HEK293 (cell line): ENCODE measurements at regions of chr11 and their contacts with region 1.

Region 1: GRCh38 chr11:73818846-73819245 is 31.2 kb downstream of the MRPL48 start:
- H3K4me3 ChIP-seq: no peak overlapping the region
- H3K27ac ChIP-seq: no peak overlapping the region
- H3K4me1 ChIP-seq: no peaks in the 10 kb centered on the region
- CTCF ChIP-seq: no peak

Region 2: DNA sequence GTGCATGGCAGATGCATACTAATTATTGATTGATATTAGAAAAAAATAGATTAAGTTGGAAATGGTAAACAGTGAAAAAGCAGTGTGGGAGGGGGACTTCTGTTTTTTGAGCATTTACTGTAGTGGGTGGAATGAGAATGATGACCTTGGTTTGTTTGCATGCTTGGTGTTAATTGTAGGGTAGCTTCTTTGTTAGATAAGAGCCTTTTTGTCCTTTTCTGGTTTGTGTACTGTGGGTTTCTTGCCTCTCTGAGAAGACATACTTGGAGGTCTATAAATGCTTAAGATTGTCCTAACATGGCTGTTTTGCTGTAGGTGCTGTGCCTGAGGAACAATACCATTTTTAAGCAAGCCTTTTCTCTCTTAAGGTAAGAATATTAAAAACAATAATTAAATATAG is 14.1 kb before region 1 on chr11:
- CTCF ChIA-PET with region 1: no interaction called
- POLR2A ChIA-PET with region 1: no interaction called
- H3K4me3 ChIP-seq: no peak overlapping the region
- H3K27ac ChIP-seq: no peak overlapping the region
- H3K4me1 ChIP-seq: no peaks in the 10 kb centered on the region
- CTCF ChIP-seq: no peak

Region 3: GRCh38 chr11:73854685-73855084 is 35.8 kb after region 1 on chr11:
- CTCF ChIA-PET with region 1: interaction called, 3 read pairs
- POLR2A ChIA-PET with region 1: interaction called, 11 read pairs
- H3K4me3 ChIP-seq: no peak overlapping the region
- H3K27ac ChIP-seq: no peak overlapping the region
- H3K4me1 ChIP-seq: no peaks in the 10 kb centered on the region
- CTCF ChIP-seq: no peak